Astrocyte of the cerebellum (primary cell): ENCODE measurements at regions of chr5 and their contacts with region 1.

Region 1: GRCh38 chr5:96709152-96709821 is 47.1 kb downstream of the CAST start:
- DNase-seq: peak; percentile 55
- H3K4me3 ChIP-seq: no peak overlapping the region
- CTCF ChIP-seq: no peak

Region 2: GRCh38 chr5:96776621-96777020 is 67.3 kb after region 1 on chr5:
- in situ Hi-C with region 1: loop called (anchors 5 kb)
- DNase-seq: no peak
- H3K4me3 ChIP-seq: no peak overlapping the region
- CTCF ChIP-seq: no peak

Region 3: GRCh38 chr5:96816411-96816939 is 107.2 kb after region 1 on chr5:
- in situ Hi-C with region 1: no loop called
- DNase-seq: no peak
- H3K4me3 ChIP-seq: no peak overlapping the region
- CTCF ChIP-seq: no peak

Region 4: GRCh38 chr5:97162045-97162444 is 452.8 kb after region 1 on chr5:
- in situ Hi-C with region 1: no loop called
- DNase-seq: peak; percentile 81
- H3K4me3 ChIP-seq: no peak overlapping the region
- CTCF ChIP-seq: peak; percentile 87